Caco-2 (cell line): ENCODE measurements at regions of chr9 and their contacts with region 1.

Region 1: DNA sequence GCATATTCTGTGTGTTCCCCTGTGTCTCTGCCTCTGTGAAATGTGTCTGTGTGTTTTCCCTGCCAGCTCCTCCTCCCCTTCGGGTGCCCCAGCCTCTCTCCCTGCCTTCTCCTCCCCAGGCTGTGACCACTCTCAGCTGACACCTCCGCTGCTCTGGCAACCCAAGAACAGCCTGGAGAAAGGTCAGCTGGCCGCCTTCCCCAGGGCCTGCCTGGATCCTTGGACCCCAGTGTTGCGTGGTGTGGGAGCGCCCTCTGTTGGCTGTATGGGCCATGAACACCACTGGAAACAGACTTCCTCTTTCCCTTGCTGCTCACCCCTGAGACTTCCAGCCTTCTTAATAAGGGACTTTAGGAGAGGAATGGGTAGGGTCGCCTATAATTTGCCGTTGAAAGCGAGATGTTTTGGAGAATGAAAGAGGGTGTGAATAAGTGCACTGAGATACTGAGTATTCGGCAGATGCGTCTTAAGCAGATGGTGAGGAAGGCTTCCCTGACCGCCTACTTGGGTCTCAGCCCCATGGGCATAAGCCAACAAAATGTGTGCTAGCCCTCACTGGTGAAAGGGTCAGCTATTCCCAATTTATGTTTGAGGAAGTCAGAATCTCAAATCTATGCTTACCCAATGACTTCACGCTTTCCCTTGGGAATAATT is 114.9 kb upstream of the TRIM32 start:
- DNase-seq: peak; percentile 82 to 86
- H3K4me3 ChIP-seq: no peak overlapping the region
- H3K4me3 Mint-ChIP-seq: no peak overlapping the region
- H3K27ac Mint-ChIP-seq: no peak overlapping the region
- H3K4me1 ChIP-seq: peaks cover 64% of the 10 kb centered on the region
- H3K4me1 Mint-ChIP-seq: peaks cover 23% of the 10 kb centered on the region
- H3K27me3 ChIP-seq: no peaks in the 10 kb centered on the region
- H3K27me3 Mint-ChIP-seq: no peaks in the 10 kb centered on the region
- CTCF ChIP-seq: peak; percentile 91 to 95

Region 2: DNA sequence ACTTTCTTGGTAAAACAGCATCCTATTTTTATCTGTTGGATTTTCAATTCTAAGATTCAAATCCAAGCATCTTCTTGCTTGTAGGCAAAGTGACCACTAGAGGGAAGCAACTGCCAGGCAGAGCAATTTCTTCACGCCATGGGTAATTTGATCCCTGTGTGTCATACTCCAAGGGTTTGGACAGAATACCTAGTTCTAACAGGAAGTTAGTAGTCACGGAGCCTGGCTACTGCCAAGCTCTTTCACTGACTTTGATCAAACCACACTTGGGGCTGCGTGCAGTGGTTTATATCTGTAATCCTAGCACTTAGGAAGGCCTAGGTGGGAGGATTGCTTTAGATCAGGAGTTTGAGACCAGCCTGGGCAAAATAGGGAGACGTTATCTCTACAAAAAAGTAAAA is 980.6 kb before region 1 on chr9:
- CTCF ChIA-PET with region 1: no interaction called
- POLR2A ChIA-PET with region 1: no interaction called
- intact Hi-C with region 1: loop called (anchors 1 kb)
- DNase-seq: peak; percentile 71 to 72
- H3K4me3 ChIP-seq: no peak overlapping the region
- H3K4me3 Mint-ChIP-seq: peak overlapping the region; percentile 31
- H3K27ac Mint-ChIP-seq: peak overlapping the region; percentile 60
- H3K4me1 ChIP-seq: 0 out of 2 replicates have a peak, but pooled peaks cover 3% of the 10 kb centered on the region
- H3K4me1 Mint-ChIP-seq: peaks cover 8% of the 10 kb centered on the region
- H3K27me3 ChIP-seq: no peaks in the 10 kb centered on the region; the same call in 1 of the 2 replicates
- H3K27me3 Mint-ChIP-seq: peaks cover 2% of the 10 kb centered on the region
- CTCF ChIP-seq: peak; percentile 71 to 86

Region 3: GRCh38 chr9:116149844-116150243 is 422.4 kb before region 1 on chr9:
- CTCF ChIA-PET with region 1: no interaction called
- POLR2A ChIA-PET with region 1: no interaction called
- intact Hi-C with region 1: loop called (anchors 1 kb)
- DNase-seq: peak; percentile 40 to 52
- H3K4me3 ChIP-seq: no peak overlapping the region
- H3K4me3 Mint-ChIP-seq: no peak overlapping the region
- H3K27ac Mint-ChIP-seq: no peak overlapping the region
- H3K4me1 ChIP-seq: no peaks in the 10 kb centered on the region
- H3K4me1 Mint-ChIP-seq: peaks cover 12% of the 10 kb centered on the region
- H3K27me3 ChIP-seq: peaks cover 2% of the 10 kb centered on the region
- H3K27me3 Mint-ChIP-seq: peaks cover 20% of the 10 kb centered on the region
- CTCF ChIP-seq: peak; percentile 70 to 75

Region 4: GRCh38 chr9:116285320-116285719 is 286.9 kb before region 1 on chr9:
- CTCF ChIA-PET with region 1: no interaction called
- POLR2A ChIA-PET with region 1: no interaction called
- intact Hi-C with region 1: loop called (anchors 2 kb)
- DNase-seq: no peak
- H3K4me3 ChIP-seq: no peak overlapping the region
- H3K4me3 Mint-ChIP-seq: no peak overlapping the region
- H3K27ac Mint-ChIP-seq: no peak overlapping the region
- H3K4me1 ChIP-seq: no peaks in the 10 kb centered on the region
- H3K4me1 Mint-ChIP-seq: no peaks in the 10 kb centered on the region
- H3K27me3 ChIP-seq: no peaks in the 10 kb centered on the region; the same call in 1 of the 2 replicates
- H3K27me3 Mint-ChIP-seq: peaks cover 7% of the 10 kb centered on the region
- CTCF ChIP-seq: peak in 1 of 2 experiments; percentile 14

Region 5: DNA sequence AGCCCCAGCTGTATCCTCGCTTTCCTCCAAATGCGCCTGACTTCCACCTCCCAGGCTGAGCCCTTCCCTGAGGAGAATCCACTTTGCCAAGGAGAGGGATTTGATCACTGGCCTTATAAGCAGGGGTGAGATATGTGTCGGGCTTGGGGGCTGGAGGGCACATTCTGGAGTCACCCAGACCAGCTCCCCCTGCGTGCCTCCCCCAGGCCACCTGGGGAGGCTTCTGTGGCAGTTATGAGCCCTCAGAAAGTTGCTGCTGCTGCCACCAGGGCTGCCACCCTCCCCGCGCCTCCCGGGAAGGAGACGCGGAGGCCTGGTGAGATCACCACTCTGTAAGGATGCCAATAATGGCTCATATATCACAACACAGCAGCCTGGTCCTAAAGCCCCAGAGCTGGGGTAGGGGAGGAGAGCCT is 207.2 kb before region 1 on chr9:
- CTCF ChIA-PET with region 1: no interaction called
- POLR2A ChIA-PET with region 1: no interaction called
- intact Hi-C with region 1: loop called (anchors 5 kb)
- DNase-seq: no peak
- H3K4me3 ChIP-seq: no peak overlapping the region
- H3K4me3 Mint-ChIP-seq: no peak overlapping the region
- H3K27ac Mint-ChIP-seq: no peak overlapping the region
- H3K4me1 ChIP-seq: no peaks in the 10 kb centered on the region
- H3K4me1 Mint-ChIP-seq: no peaks in the 10 kb centered on the region
- H3K27me3 ChIP-seq: no peaks in the 10 kb centered on the region
- H3K27me3 Mint-ChIP-seq: peaks cover 3% of the 10 kb centered on the region
- CTCF ChIP-seq: no peak

Region 6: DNA sequence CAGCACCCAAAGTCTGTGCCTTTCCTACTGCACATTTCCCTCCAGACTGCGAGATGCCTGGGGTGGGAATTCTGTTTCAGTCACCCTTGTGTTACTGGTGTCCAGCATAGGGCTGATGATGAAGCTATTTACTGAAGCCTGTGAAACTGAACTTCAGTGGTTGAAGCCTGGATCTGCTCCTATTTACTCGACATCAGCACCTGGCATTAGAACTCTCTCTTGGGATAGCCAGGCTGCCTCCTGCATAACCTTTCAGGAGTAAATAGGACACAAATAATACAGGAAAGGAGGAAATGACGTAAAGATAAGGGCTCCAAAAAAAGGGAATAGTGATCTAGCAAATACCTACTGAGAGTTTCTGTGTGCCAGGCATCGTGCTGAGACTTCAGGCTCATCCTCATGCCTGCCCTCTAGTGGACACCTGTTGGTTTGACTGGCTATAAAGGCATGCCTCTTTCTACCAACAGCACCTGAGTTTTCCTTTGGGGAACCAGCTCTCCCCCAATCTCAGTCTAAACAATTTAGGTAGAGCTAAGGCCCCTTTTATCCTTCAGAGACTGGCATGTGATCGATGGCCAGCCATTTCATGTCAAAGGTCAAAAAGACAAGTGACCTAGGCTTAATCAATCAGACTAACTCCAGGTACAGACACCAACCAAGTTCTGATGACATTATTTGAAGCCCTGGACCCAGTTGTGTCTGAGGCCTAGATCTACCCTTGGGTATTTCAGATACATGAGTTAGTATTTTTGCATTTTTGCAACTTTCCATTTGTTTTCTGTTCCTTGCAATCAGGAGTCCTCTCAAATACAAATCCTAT is 77.2 kb before region 1 on chr9:
- CTCF ChIA-PET with region 1: no interaction called
- POLR2A ChIA-PET with region 1: no interaction called
- intact Hi-C with region 1: loop called (anchors 1 kb)
- DNase-seq: peak in 1 of 2 experiments; percentile 30
- H3K4me3 ChIP-seq: no peak overlapping the region
- H3K4me3 Mint-ChIP-seq: no peak overlapping the region
- H3K27ac Mint-ChIP-seq: no peak overlapping the region
- H3K4me1 ChIP-seq: peaks cover 6% of the 10 kb centered on the region
- H3K4me1 Mint-ChIP-seq: peaks cover 5% of the 10 kb centered on the region
- H3K27me3 ChIP-seq: no peaks in the 10 kb centered on the region
- H3K27me3 Mint-ChIP-seq: no peaks in the 10 kb centered on the region
- CTCF ChIP-seq: peak; percentile 41 to 64

Region 7: GRCh38 chr9:116646661-116647512 is 74.7 kb after region 1 on chr9:
- CTCF ChIA-PET with region 1: interaction called, 14 read pairs
- POLR2A ChIA-PET with region 1: no interaction called
- intact Hi-C with region 1: loop called (anchors 1 kb)
- DNase-seq: peak in 1 of 2 experiments; percentile 49
- H3K4me3 ChIP-seq: no peak overlapping the region
- H3K4me3 Mint-ChIP-seq: no peak overlapping the region
- H3K27ac Mint-ChIP-seq: no peak overlapping the region
- H3K4me1 ChIP-seq: peaks cover 5% of the 10 kb centered on the region; the same call in 1 of the 2 replicates
- H3K4me1 Mint-ChIP-seq: peaks cover 6% of the 10 kb centered on the region
- H3K27me3 ChIP-seq: no peaks in the 10 kb centered on the region
- H3K27me3 Mint-ChIP-seq: no peaks in the 10 kb centered on the region
- CTCF ChIP-seq: peak; percentile 58 to 71

Region 8: GRCh38 chr9:116913536-116913935 is 341.3 kb after region 1 on chr9:
- CTCF ChIA-PET with region 1: no interaction called
- POLR2A ChIA-PET with region 1: no interaction called
- intact Hi-C with region 1: no loop called
- DNase-seq: no peak
- H3K4me3 ChIP-seq: no peak overlapping the region
- H3K4me3 Mint-ChIP-seq: no peak overlapping the region
- H3K27ac Mint-ChIP-seq: no peak overlapping the region
- H3K4me1 ChIP-seq: no peaks in the 10 kb centered on the region
- H3K4me1 Mint-ChIP-seq: no peaks in the 10 kb centered on the region
- H3K27me3 ChIP-seq: no peaks in the 10 kb centered on the region
- H3K27me3 Mint-ChIP-seq: peaks cover 17% of the 10 kb centered on the region
- CTCF ChIP-seq: no peak